MCF 10A (cell line): ENCODE measurements at regions of chr18 and their contacts with region 1.

Region 1: GRCh38 chr18:63994783-63995399 is 25.0 kb downstream of the SERPINB8 start:
- DNase-seq: peak; percentile 52
- H3K4me3 Mint-ChIP-seq: no peak overlapping the region
- H3K27ac Mint-ChIP-seq: no peak overlapping the region
- H3K4me1 Mint-ChIP-seq: no peaks in the 10 kb centered on the region
- H3K27me3 Mint-ChIP-seq: no peaks in the 10 kb centered on the region
- CTCF ChIP-seq: peak; percentile 92

Region 2: DNA sequence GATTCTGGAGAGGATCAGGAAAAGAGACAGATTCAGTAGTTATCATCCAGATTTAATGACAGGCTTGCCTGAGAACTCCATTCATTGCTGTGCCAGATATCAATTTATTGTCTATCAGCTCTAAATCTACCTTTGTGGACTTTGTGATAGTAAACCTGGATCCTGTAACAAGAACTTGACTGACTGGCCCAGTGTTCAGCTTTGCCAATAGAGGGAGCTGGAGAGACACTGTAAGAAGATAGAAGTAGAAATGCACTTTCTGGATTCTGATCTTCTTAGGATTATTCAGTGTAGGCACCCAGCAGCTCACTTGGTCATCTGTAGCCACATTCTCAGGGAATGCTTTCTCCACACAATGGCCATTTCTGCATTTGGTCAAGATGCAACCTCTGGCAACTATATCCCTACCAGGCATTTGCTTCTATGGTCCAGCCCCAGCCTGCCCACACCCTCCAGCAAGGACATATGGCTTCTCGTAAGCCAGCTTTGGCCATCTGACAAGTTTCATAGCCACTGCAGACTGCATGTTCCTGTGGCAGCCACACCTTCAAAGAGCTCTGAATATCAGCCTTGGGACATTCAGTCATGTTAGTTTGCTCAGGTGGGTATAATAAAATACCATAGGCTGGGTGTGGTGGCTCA is 31.2 kb before region 1 on chr18:
- CTCF ChIA-PET with region 1: interaction called, 10 read pairs
- POLR2A ChIA-PET with region 1: no interaction called
- intact Hi-C with region 1: loop called (anchors 1 kb)
- DNase-seq: peak; percentile 69
- H3K4me3 Mint-ChIP-seq: no peak overlapping the region
- H3K27ac Mint-ChIP-seq: peak overlapping the region; percentile 9
- H3K4me1 Mint-ChIP-seq: peaks cover 13% of the 10 kb centered on the region
- H3K27me3 Mint-ChIP-seq: no peaks in the 10 kb centered on the region
- CTCF ChIP-seq: peak; percentile 77

Region 3: GRCh38 chr18:64009305-64009704 is 14.4 kb after region 1 on chr18:
- CTCF ChIA-PET with region 1: interaction called, 12 read pairs
- POLR2A ChIA-PET with region 1: no interaction called
- intact Hi-C with region 1: no loop called
- DNase-seq: no peak
- H3K4me3 Mint-ChIP-seq: no peak overlapping the region
- H3K27ac Mint-ChIP-seq: no peak overlapping the region
- H3K4me1 Mint-ChIP-seq: no peaks in the 10 kb centered on the region
- H3K27me3 Mint-ChIP-seq: peaks cover 57% of the 10 kb centered on the region
- CTCF ChIP-seq: no peak